Posterior cingulate gyrus (tissue), 11 donors: ENCODE measurements at regions of chr9 and their contacts with region 1.

Region 1: DNA sequence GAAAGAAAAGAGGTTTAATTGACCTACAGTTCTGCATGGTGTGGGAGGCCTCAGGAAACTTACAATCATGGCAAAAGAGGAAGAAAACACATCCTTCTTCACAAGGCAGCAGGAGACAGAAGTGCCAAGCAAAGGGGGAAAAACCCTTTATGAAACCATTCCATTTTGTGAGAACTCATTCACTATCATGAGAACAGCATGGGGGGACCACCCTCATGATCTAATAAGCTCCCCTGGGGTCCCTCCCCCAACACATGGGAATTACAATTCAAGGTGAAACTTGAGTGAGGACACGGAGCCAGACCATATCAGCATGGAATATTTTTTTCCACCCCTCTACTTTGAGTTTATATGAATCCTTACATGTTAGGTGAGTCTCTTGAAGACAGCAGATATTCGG is 173.7 kb downstream of the PHF2 start:
- DNase-seq: no peak

Region 2: GRCh38 chr9:93801581-93802284 is 51.7 kb after region 1 on chr9:
- intact Hi-C with region 1: loop called (anchors 2 kb)
- DNase-seq: peak in 1 of 10 donors; percentile 55

Region 3: GRCh38 chr9:93827545-93828330 is 77.7 kb after region 1 on chr9:
- intact Hi-C with region 1: no loop called
- DNase-seq: peak in 9 of 10 donors; percentile 30 to 94 (median 60)

Region 4: GRCh38 chr9:93871294-93871693 is 121.2 kb after region 1 on chr9:
- intact Hi-C with region 1: no loop called
- DNase-seq: no peak